HCT116 (cell line): ENCODE measurements at regions of chr2 and their contacts with region 1.

Region 1: DNA sequence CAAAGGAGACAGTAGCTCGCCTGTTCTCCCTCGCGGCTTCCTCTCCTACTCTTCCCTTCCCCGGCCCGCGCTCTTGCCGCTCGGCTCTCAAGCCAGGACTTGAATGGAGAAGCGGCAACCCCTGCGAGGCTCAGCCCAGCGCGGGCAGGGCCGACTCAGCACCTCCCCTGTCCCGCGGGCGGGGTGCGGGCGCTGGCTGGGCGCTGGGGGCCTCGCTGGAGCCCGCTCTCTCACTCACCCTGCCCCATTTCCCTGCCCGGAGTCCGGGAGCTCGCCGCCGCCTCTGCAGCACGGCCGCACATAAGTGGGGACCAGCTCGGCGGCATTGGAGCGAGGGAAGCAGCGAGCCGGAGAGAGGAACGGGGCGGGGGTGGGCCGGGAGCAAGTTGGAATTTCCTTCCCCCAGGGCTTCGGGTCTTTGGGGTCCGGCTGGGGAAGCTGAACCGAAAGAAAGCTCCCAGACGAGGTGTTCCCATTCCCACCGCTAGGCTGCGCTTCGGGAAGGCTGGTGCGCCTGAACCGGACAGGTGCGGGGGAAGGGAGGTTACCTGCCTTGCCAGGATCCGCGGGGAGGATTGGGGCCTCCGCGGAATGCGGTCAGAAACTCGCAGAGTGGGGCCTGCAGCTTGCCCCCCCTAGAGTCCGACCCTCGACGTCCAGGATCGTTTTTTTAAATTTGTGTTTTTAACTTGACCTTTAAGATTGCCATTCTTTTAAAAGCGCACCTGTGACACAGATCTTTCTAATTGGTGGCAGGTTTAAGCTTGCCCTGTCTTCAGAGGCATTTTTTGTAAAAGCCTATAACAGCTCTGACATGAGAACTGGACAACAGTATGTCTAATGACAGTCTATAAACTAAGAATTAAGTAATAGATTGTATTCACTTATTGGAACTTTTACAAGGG is at the start of gene COBLL1:
- DNase-seq: peak; percentile 71
- ATAC-seq: peak; percentile 74
- H3K4me3 ChIP-seq: peak within 1 kb of the TSS; percentile 59 to 81
- H3K27ac ChIP-seq: peak within 1 kb of the TSS; percentile 71
- H3K4me1 ChIP-seq: peaks cover 7 to 16% of the 10 kb centered on the region in 2 experiments; a peak in 3 of 4 replicates
- H3K27me3 ChIP-seq: no peaks in the 10 kb centered on the region
- CTCF ChIP-seq: peak; percentile 39 to 83 (median 72); a peak in 4 of 6 replicates
- POLR2A ChIP-seq: no peak
- RAD21 ChIP-seq: peak; percentile 39; the same call in 1 of the 2 replicates
- total RNA-seq, gene COBLL1: 3.6 TPM

Region 2: GRCh38 chr2:164859251-164859800 is 17.4 kb after region 1 on chr2:
- CTCF ChIA-PET with region 1: interaction called, 20 read pairs
- POLR2A ChIA-PET with region 1: no interaction called
- RAD21 ChIA-PET with region 1: no interaction called
- intact Hi-C with region 1: no loop called
- DNase-seq: no peak
- ATAC-seq: no peak
- H3K4me3 ChIP-seq: no peak overlapping the region
- H3K27ac ChIP-seq: no peak overlapping the region
- H3K4me1 ChIP-seq: no peaks in the 10 kb centered on the region
- H3K27me3 ChIP-seq: no peaks in the 10 kb centered on the region
- CTCF ChIP-seq: no peak
- POLR2A ChIP-seq: no peak
- RAD21 ChIP-seq: no peak

Region 3: GRCh38 chr2:164896634-164897355 is 54.8 kb after region 1 on chr2:
- CTCF ChIA-PET with region 1: no interaction called
- POLR2A ChIA-PET with region 1: no interaction called
- RAD21 ChIA-PET with region 1: no interaction called
- intact Hi-C with region 1: loop called (anchors 5 kb)
- DNase-seq: peak; percentile 24
- ATAC-seq: peak; percentile 85
- H3K4me3 ChIP-seq: no peak overlapping the region
- H3K27ac ChIP-seq: no peak overlapping the region
- H3K4me1 ChIP-seq: peaks cover 3 to 12% of the 10 kb centered on the region in 2 experiments; a peak in 3 of 4 replicates
- H3K27me3 ChIP-seq: no peaks in the 10 kb centered on the region
- CTCF ChIP-seq: no peak
- POLR2A ChIP-seq: no peak
- RAD21 ChIP-seq: no peak

Region 4: DNA sequence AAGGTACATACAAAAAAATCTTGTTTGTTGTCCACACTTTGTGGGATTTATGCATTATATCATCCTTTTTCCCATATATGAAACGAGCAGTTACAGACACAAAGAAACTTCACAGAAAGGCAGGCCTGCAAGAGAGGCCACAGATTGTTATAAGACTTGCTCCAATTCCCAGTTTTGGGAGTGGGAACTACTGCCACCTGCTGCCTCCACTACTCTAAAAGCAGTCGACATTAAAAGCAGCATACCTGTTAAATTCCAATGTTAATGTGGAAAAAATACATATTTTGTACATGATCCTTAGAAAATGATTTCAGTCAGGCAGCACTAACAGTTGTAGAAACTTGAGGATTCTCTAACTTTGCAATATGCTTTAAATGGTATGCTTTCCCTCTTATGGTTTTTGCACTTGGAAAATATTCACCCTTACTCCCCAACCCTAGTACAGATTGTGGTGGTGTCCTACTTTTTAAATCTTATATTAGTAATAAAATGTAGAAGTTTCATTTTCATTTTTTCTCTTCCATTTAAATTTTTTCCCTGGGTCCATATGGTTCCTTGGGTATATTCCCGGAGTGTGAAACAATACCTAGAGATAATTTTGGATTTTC is 75.4 kb after region 1 on chr2:
- CTCF ChIA-PET with region 1: interaction called, 12 read pairs
- POLR2A ChIA-PET with region 1: interaction called, 3 read pairs
- RAD21 ChIA-PET with region 1: no interaction called
- intact Hi-C with region 1: loop called (anchors 2 kb)
- DNase-seq: peak; percentile 40
- ATAC-seq: peak; percentile 83
- H3K4me3 ChIP-seq: no peak overlapping the region
- H3K27ac ChIP-seq: no peak overlapping the region
- H3K4me1 ChIP-seq: peaks cover 0 to 8% of the 10 kb centered on the region in 2 experiments; a peak in 2 of 4 replicates
- H3K27me3 ChIP-seq: no peaks in the 10 kb centered on the region
- CTCF ChIP-seq: peak; percentile 60 to 79 (median 63)
- POLR2A ChIP-seq: no peak
- RAD21 ChIP-seq: peak; percentile 78

Region 5: GRCh38 chr2:165067958-165068757 is 226.2 kb after region 1 on chr2:
- CTCF ChIA-PET with region 1: no interaction called
- POLR2A ChIA-PET with region 1: no interaction called
- RAD21 ChIA-PET with region 1: no interaction called
- intact Hi-C with region 1: no loop called
- DNase-seq: no peak
- ATAC-seq: 0 out of 2 replicates have a peak, but pooled peaks have one; percentile 44
- H3K4me3 ChIP-seq: no peak overlapping the region
- H3K27ac ChIP-seq: no peak overlapping the region
- H3K4me1 ChIP-seq: no peaks in the 10 kb centered on the region
- H3K27me3 ChIP-seq: no peaks in the 10 kb centered on the region
- CTCF ChIP-seq: no peak
- POLR2A ChIP-seq: no peak
- RAD21 ChIP-seq: no peak